HepG2 (cell line): ENCODE measurements at regions of chr14 and their contacts with region 1.

Region 1: DNA sequence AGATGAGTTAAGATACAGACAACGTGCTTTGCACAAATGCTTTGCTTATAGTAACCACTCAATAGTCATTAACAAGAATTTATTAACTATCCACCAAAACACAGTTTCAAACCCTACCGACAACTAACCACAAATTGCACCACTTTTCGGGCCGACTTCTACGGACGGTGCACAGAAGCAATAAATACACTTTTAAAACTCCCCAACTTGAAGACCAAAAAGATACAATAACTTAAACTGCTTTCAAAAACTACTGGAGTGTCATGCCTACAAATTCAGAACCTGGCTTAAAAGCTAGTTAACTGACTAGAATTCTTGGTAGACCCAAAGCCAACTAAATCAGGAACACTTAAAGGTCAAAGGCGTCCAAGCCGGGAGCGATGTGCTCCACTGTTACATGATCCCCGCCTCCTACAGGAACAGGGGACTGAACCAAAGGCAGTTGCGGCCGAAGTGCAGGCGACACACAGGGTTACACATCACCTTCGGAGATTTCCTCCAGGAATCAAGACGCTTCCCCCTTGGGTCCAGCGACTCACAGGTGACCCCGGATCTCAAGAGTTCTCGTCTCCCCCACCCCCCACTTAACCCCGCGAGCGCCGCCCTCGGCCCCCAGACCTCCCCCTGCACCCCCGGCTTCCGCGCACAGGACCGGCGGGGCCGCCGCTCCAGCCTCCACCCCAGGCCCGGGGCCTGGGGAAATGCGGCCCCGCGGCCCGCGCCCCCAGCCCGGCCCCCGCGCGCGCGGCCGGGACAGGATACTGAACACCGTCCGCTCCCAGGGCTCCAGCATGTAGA is 507 bp downstream of the SPTSSA start:
- DNase-seq: peak; percentile 89
- ATAC-seq: peak; percentile 75
- H3K4me3 ChIP-seq: peak overlapping the region; percentile 68 to 94 (median 73)
- H3K27ac ChIP-seq: peak overlapping the region; percentile 77
- H3K4me1 ChIP-seq: peaks cover 72% of the 10 kb centered on the region
- H3K27me3 ChIP-seq: no peaks in the 10 kb centered on the region; a peak in 1 of 5 replicates
- CTCF ChIP-seq: 0 out of 2 replicates have a peak, but pooled peaks have one; percentile 23
- EP300 ChIP-seq: no peak; a peak in 2 of 4 replicates
- POLR2A ChIP-seq: peak in 1 of 2 experiments; percentile 86; a peak in 2 of 4 replicates
- RAD21 ChIP-seq: no peak; the same call in 1 of the 2 replicates

Region 2: DNA sequence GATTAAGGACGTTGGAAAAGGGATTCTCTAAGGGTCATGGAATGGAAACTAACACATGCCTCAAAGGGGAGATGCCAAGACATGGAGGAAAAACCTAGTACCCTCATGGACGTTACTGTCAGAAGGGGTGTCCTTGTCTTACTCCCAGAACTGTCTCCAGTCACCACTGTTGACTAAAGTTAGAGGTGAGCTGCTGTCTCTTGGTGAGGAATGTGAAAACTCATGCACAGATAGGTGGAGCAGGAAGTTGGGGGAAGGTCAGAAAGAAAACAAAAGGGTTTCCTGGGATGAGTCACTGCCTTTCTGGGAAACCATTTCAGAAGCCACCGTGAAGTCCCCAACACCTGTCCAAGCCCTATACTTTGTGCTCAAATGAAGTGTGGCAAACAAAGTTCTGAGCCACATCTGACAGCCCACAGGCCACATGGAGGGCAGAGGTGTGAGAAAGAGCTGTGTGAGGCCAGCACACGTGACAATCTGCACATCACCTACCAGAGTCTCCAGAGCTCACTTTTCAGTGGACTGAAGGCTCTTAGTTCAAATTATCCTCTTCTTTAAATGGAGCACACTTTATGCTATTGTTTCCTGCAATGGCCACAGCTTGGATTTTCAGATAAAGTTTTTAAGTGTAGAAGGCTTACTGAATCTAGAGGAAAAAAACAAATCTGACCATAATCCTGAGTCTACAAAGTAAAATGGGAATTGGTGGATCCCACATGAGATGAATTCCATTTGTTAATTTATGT is 417.7 kb before region 1 on chr14:
- CTCF ChIA-PET with region 1: no interaction called
- POLR2A ChIA-PET with region 1: no interaction called
- in situ Hi-C with region 1: loop called (anchors 25 kb)
- intact Hi-C with region 1: no loop called
- DNase-seq: peak; percentile 99
- ATAC-seq: peak; percentile 90
- H3K4me3 ChIP-seq: no peak overlapping the region
- H3K27ac ChIP-seq: peak overlapping the region; percentile 62
- H3K4me1 ChIP-seq: peaks cover 75% of the 10 kb centered on the region
- H3K27me3 ChIP-seq: no peaks in the 10 kb centered on the region
- CTCF ChIP-seq: peak; percentile 38; the same call in 1 of the 2 replicates
- EP300 ChIP-seq: peak in 1 of 2 experiments; percentile 98; a peak in 3 of 4 replicates
- POLR2A ChIP-seq: peak in 1 of 2 experiments; percentile 73; a peak in 1 of 4 replicates
- RAD21 ChIP-seq: no peak

Region 3: GRCh38 chr14:34365309-34365915 is 96.1 kb before region 1 on chr14:
- CTCF ChIA-PET with region 1: no interaction called
- POLR2A ChIA-PET with region 1: interaction called, 7 read pairs
- in situ Hi-C with region 1: no loop called
- intact Hi-C with region 1: loop called (anchors 2 kb)
- DNase-seq: peak; percentile 59
- ATAC-seq: peak; percentile 75
- H3K4me3 ChIP-seq: peak overlapping the region in 1 of 3 experiments; percentile 1; a peak in 1 of 6 replicates
- H3K27ac ChIP-seq: no peak overlapping the region
- H3K4me1 ChIP-seq: peaks cover 35% of the 10 kb centered on the region
- H3K27me3 ChIP-seq: peaks cover 0 to 2% of the 10 kb centered on the region in 2 experiments; a peak in 1 of 5 replicates
- CTCF ChIP-seq: peak; percentile 62
- EP300 ChIP-seq: no peak
- POLR2A ChIP-seq: no peak
- RAD21 ChIP-seq: peak; percentile 55; the same call in 1 of the 2 replicates

Region 4: GRCh38 chr14:34436118-34436880 is 25.2 kb before region 1 on chr14:
- CTCF ChIA-PET with region 1: no interaction called
- POLR2A ChIA-PET with region 1: interaction called, 13 read pairs
- in situ Hi-C with region 1: no loop called
- intact Hi-C with region 1: no loop called
- DNase-seq: peak; percentile 55
- ATAC-seq: peak; percentile 19; the same call in 2 of the 3 replicates
- H3K4me3 ChIP-seq: no peak overlapping the region; a peak in 1 of 6 replicates
- H3K27ac ChIP-seq: peak overlapping the region; percentile 41
- H3K4me1 ChIP-seq: peaks cover 27% of the 10 kb centered on the region
- H3K27me3 ChIP-seq: no peaks in the 10 kb centered on the region
- CTCF ChIP-seq: no peak
- EP300 ChIP-seq: no peak
- POLR2A ChIP-seq: no peak
- RAD21 ChIP-seq: no peak

Region 5: GRCh38 chr14:34527591-34527990 is 66.1 kb after region 1 on chr14:
- CTCF ChIA-PET with region 1: no interaction called
- POLR2A ChIA-PET with region 1: no interaction called
- in situ Hi-C with region 1: no loop called
- intact Hi-C with region 1: no loop called
- DNase-seq: no peak
- ATAC-seq: peak; percentile 17; the same call in 2 of the 3 replicates
- H3K4me3 ChIP-seq: no peak overlapping the region
- H3K27ac ChIP-seq: no peak overlapping the region
- H3K4me1 ChIP-seq: no peaks in the 10 kb centered on the region
- H3K27me3 ChIP-seq: no peaks in the 10 kb centered on the region
- CTCF ChIP-seq: no peak
- EP300 ChIP-seq: no peak
- POLR2A ChIP-seq: no peak
- RAD21 ChIP-seq: no peak

Region 6: DNA sequence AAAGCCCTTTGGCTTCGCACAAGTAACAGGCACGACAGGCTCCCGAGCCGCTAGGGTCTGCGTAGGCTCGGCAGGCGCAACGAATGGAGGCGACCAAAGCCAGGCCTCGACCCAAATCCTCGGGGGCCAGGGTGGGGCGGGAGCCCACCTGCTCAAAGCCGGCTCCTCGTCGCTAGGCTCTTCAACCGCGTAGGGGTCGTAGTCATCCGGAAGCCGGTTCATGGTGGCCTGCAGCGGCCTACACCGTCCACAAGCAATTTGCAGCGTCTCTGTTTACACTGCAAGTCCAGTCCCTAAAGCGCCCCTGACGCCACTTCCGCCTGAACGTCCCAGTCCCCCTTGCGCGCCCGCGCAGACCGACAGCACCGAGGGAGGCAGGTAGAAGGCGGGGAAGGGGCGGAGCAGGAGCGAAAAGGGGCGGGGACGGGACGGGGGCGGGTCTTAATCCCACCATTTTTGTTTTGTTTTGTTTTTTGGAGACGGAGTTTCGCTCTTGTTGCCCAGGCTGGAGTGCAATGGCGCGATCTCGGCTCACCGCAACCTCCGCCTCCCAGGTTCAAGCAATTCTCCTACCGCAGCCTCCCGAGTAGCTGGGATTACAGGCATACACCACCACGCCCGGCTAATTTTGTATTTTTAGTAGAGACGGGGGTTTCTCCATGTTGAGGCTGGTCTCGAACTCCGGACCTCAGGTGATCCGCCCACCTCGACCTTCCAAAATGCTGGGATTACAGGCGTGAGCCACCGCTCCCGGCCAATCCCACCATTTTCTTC is 78.1 kb after region 1 on chr14 and contains the start of gene EAPP:
- CTCF ChIA-PET with region 1: no interaction called
- POLR2A ChIA-PET with region 1: interaction called, 12 read pairs
- in situ Hi-C with region 1: no loop called
- intact Hi-C with region 1: loop called (anchors 5 kb)
- DNase-seq: peak; percentile 100
- ATAC-seq: peak; percentile 96
- H3K4me3 ChIP-seq: peak within 1 kb of the TSS; percentile 86 to 99 (median 92)
- H3K27ac ChIP-seq: peak within 1 kb of the TSS; percentile 95
- H3K4me1 ChIP-seq: peaks cover 25% of the 10 kb centered on the region
- H3K27me3 ChIP-seq: peaks cover 0 to 4% of the 10 kb centered on the region in 2 experiments; a peak in 1 of 5 replicates
- CTCF ChIP-seq: peak; percentile 51
- EP300 ChIP-seq: peak; percentile 65 to 77; a peak in 3 of 4 replicates
- POLR2A ChIP-seq: peak; percentile 99
- RAD21 ChIP-seq: peak; percentile 79
- total RNA-seq, gene EAPP: 110 and 163 TPM in 2 replicates